AG04449 (cell line): ENCODE measurements at regions of chr11 and their contacts with region 1.

Region 1: DNA sequence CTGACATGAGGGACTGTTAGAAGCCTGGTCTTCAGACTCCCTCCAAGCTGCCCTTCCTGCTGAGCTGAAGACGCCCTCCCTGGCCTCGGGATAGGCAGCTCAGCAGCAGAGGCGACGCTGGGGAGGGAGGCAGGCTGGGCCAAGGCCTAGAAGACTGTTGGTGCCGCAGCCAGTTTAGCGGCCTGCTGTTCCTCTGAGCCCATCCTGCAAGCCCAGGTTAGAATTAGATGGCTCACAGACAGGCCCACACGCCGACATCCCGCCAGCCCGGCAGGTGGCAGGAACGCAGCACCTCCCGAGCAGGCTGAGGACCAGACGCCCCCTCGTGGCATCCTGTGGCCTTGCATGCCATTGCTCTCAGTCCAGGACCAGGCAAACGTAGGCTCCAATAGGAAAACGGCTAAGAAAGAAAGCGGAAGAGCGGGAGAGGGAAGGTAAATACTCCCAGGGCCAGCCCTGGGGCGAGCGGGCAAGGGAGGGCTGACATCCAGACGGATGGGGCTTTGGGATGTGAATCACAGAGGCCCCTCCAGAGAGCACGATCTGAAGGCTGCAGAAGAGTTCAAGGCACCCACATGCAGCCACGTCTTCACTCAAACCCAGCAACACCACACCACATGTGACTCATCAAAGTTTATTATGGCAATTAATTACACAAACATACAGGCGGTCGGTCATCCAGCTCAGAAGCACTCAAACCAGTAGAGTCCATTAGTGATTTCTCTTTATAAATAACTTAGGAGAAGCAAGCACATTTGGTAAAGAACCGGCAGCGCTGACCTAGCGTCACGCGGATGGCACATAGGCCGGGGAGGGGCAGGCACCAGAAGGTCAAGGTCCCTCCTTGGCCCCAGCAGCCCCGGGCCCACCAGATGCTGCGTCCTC is 27.6 kb downstream of the CD5 start:
- DNase-seq: peak; percentile 65
- H3K4me3 ChIP-seq: peak overlapping the region; percentile 36
- CTCF ChIP-seq: peak; percentile 100

Region 2: DNA sequence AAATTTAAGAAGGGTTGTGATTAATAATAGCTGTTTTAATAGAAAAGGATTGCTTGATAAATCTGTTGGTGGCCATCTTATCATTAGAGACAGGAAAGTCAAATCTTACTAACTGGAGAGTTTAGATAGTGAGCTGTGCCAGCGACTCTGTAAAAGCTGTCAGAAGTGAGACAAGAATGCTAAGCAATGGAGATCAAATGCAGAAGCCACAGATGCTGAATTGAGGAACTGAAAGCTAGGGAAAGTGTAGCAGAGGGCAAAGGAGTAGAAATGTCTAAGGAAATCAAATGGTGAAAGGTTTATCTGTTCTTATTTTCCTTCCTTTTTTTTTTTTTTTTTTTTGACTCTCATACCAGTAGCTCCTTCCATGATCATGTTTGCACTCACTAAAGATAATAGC is 600.9 kb before region 1 on chr11:
- CTCF ChIA-PET with region 1: no interaction called
- POLR2A ChIA-PET with region 1: no interaction called
- DNase-seq: no peak
- H3K4me3 ChIP-seq: no peak overlapping the region
- CTCF ChIP-seq: no peak

Region 3: GRCh38 chr11:61098778-61099177 is 31.1 kb before region 1 on chr11:
- CTCF ChIA-PET with region 1: no interaction called
- POLR2A ChIA-PET with region 1: no interaction called
- DNase-seq: no peak
- H3K4me3 ChIP-seq: no peak overlapping the region
- CTCF ChIP-seq: no peak

Region 4: DNA sequence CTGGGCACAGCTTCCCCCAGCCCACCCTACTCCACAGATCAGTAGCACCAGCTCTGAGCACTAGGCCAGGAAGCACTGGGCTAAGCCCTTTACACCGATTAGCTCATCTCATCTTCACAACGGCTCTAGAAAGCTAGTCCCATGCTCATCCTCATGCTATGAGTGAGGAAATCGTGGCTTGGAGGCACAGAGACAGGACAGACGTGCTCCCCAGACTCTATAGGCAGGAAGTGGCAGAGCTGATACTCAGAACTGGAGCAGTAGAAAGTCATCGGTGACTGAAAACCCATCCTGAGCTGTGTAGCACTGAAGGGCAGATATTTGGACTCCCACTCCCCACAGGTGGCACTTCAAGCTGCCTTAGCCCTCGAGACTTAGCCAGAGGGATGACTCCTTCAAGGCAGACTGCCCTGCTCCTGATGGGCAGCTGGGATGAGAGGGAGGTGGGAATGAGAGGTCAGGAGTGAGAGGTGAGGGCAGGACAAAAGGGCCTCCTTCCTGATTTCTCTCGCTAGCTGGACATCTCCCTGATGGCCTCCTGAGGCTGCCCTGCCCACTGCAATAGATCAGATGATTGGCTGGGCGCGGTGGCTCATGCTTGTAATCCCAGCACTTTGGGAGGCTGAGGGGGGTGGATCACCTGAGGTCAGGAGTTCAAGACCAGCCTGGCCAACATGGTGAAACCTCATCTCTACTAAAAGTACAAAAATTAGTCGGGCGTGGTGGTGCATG is 17.9 kb before region 1 on chr11:
- CTCF ChIA-PET with region 1: interaction called, 47 read pairs
- POLR2A ChIA-PET with region 1: no interaction called
- DNase-seq: no peak
- H3K4me3 ChIP-seq: no peak overlapping the region
- CTCF ChIP-seq: no peak

Region 5: DNA sequence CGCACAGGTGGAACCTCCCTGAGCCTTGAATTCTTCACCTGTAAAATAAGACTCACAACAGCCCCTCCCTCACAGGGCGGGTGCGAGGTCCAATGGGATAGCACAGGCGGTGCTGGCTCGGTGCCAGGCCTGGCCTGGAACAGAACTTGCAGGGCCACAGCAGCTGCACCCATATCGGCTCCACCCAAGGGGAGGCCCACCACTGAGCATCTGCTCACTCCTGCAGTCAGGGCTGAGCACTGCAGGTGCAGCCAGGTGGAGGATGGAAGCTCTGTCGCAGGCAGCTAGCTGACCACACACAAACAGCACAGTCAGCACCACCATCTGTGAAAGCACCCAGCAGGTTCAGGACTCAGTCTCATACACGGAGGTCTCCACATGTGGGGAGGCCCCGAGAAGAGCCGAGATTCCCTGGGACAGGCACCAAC is 11.7 kb after region 1 on chr11:
- CTCF ChIA-PET with region 1: interaction called, 65 read pairs
- POLR2A ChIA-PET with region 1: interaction called, 3 read pairs
- DNase-seq: no peak
- H3K4me3 ChIP-seq: no peak overlapping the region
- CTCF ChIP-seq: no peak

Region 6: DNA sequence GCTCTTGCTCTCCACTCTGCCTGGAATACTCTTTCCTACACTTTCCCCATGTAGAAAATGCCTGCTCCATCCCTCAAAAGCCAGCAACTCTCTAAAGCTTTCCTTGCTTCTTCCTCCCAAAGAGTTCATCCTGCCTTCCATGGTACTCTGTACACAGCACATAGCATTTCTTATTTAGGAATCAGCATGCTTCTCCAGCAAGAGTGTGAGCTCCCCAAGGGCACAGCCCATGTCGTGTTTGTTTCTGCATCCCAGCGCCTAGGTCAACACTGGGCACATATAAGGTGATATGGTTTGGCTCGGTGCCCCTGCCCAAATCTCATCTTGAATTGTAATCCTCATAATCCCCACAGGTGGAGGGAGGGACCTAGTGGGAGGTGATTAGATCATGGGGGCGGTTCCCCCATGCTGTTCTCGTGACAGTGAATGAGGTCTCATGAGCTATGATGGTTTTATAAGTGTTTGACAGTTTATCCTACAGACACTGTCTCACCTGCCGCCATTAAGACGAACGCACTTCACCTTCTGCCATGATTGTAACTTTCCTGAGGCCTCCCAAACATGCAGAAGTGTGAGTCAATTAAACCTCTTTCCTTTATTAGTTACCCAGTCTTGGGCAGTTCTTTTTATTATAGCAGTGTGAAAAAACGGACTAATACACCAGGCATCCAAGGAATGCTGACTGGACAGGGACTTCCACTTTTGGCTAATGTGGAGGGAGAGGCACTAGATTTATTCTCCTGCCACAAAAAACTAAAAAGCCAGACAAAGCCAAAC is 23.1 kb after region 1 on chr11:
- CTCF ChIA-PET with region 1: interaction called, 20 read pairs
- POLR2A ChIA-PET with region 1: no interaction called
- DNase-seq: peak; percentile 44
- H3K4me3 ChIP-seq: no peak overlapping the region
- CTCF ChIP-seq: no peak

Region 7: DNA sequence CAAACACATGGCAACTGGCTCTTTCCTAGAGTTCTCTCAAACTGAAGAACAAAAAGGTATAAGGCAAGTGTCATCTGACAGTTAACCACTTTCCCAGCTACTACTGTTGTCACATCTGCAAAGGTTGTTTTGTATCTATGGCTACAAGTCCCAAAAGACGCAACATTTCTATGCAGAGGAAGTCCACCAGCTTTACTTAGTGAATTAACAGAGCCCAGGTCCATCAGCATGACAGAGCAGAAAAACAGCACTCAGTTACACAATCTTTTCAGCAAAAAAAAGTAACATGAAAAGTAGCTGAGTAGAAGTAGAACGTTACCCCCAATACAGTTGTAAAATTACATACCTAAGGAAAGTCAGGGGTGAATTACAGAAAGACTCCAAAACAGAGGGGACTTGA is 287.8 kb after region 1 on chr11:
- CTCF ChIA-PET with region 1: no interaction called
- POLR2A ChIA-PET with region 1: no interaction called
- DNase-seq: no peak
- H3K4me3 ChIP-seq: no peak overlapping the region
- CTCF ChIP-seq: no peak